ENCODE measurements at regions of chr13 and their contacts with region 1.

Region 1: DNA sequence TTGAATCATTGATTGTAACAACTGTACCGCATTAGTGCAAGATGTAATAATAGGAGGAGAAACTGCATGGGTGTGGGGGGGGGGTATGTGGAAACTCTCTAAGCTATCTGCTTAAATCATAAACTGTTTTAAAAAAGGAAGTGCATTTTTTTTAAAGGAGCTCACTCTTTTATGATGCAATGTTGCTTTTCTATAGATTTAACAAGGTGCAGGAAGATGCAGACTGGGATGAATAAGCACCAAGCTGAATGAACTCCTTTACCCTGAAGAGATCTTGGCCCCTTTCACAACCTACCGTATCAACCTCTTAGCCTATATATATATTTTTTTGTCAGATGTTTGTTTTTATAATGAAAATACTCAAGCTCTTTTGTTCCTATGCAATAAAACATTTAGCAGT is 95.9 kb downstream of the AKAP11 start:
- DNase-seq: peak in 1 of 2 experiments; percentile 35
- H3K4me3 ChIP-seq: no peak overlapping the region
- H3K27ac ChIP-seq: no peak overlapping the region
- H3K4me1 ChIP-seq: no peaks in the 10 kb centered on the region
- H3K27me3 ChIP-seq: no peaks in the 10 kb centered on the region
- CTCF ChIP-seq: no peak

Region 2: GRCh38 chr13:42354241-42355091 is 13.4 kb before region 1 on chr13:
- CTCF ChIA-PET with region 1: interaction called, 12 read pairs
- POLR2A ChIA-PET with region 1: no interaction called
- intact Hi-C with region 1: no loop called
- DNase-seq: no peak
- H3K4me3 ChIP-seq: no peak overlapping the region
- H3K27ac ChIP-seq: no peak overlapping the region
- H3K4me1 ChIP-seq: no peaks in the 10 kb centered on the region
- H3K27me3 ChIP-seq: no peaks in the 10 kb centered on the region
- CTCF ChIP-seq: no peak